Sciatic nerve (tissue), 2 donors: ENCODE measurements at regions of chr1 and their contacts with region 1.

Region 1: DNA sequence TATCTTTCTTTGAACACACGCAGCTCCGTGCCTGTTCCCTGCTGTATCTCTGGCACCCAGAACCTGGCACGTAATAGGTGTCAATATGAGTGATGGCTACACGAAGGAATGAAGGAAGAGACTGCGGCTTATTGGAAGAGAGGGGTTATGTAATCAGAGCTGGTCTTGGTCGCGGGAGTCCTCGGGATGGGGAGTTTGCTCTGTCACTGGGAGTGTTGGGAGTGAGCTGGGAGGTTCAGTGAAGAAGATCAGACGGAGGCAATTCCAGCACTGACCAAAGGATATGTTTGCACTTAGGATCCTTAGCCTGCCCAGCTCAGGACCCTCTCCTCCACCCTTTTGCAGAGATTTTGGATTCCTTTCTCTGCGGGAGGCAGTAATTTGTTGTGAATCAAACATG is 709.1 kb downstream of the PTPRU start:
- DNase-seq: no peak
- ATAC-seq: no peak

Region 2: GRCh38 chr1:29975036-29975694 is 29.7 kb after region 1 on chr1:
- intact Hi-C with region 1: loop called (anchors 1 kb)
- DNase-seq: no peak
- ATAC-seq: no peak